ENCODE measurements at regions of chr15 and their contacts with region 1.

Region 1: DNA sequence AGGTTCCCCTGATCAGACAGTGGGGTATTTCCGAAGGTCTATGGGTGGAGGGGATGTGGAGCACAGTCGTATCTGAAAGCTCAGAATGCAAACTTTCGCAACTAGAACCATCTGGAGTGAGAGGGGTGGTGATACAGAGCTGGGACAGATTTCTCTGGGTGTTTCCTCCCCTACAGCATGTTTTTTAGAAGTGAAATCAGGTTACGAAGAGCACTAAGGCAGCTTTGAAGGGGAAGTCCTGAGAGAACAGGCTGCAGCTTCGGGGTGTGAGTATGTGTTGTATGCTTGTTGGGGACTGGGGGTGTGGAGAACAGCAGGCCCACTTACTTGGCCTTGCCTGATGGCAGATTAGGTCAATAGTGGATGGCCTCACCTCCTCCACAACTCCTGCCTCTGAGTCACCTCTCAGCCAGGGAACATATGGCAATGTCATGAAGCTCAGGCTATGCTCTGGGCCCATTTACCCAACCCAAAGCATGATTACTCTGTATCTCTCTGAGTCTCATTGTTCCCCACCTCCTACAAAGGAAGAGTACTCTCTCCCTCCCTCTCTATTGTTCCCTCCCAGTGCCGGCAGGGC is 107.2 kb upstream of the RASGRP1 start:
- DNase-seq: peak; percentile 6
- ATAC-seq: no peak
- H3K4me3 ChIP-seq: no peak overlapping the region
- H3K27ac ChIP-seq: no peak overlapping the region
- H3K4me1 ChIP-seq: no peaks in the 10 kb centered on the region
- H3K27me3 ChIP-seq: peaks cover 55% of the 10 kb centered on the region
- CTCF ChIP-seq: no peak
- POLR2A ChIP-seq: no peak
- RAD21 ChIP-seq: no peak

Region 2: GRCh38 chr15:38176155-38176554 is 495.6 kb before region 1 on chr15:
- CTCF ChIA-PET with region 1: no interaction called
- POLR2A ChIA-PET with region 1: no interaction called
- dilution Hi-C with region 1: no loop called
- in situ Hi-C with region 1: loop called (anchors 25 kb)
- intact Hi-C with region 1: no loop called
- DNase-seq: peak; percentile 68
- ATAC-seq: peak; percentile 83
- H3K4me3 ChIP-seq: no peak overlapping the region
- H3K27ac ChIP-seq: no peak overlapping the region
- H3K4me1 ChIP-seq: no peaks in the 10 kb centered on the region
- H3K27me3 ChIP-seq: peaks cover 14% of the 10 kb centered on the region
- CTCF ChIP-seq: no peak
- POLR2A ChIP-seq: no peak
- RAD21 ChIP-seq: no peak

Region 3: GRCh38 chr15:38461066-38461833 is 210.5 kb before region 1 on chr15:
- CTCF ChIA-PET with region 1: no interaction called
- POLR2A ChIA-PET with region 1: no interaction called
- dilution Hi-C with region 1: no loop called
- in situ Hi-C with region 1: no loop called
- intact Hi-C with region 1: no loop called
- DNase-seq: peak; percentile 63
- ATAC-seq: peak; percentile 99
- H3K4me3 ChIP-seq: no peak overlapping the region
- H3K27ac ChIP-seq: no peak overlapping the region
- H3K4me1 ChIP-seq: 0 out of 2 replicates have a peak, but pooled peaks cover 1% of the 10 kb centered on the region
- H3K27me3 ChIP-seq: no peaks in the 10 kb centered on the region
- CTCF ChIP-seq: no peak
- POLR2A ChIP-seq: no peak
- RAD21 ChIP-seq: no peak

Region 4: DNA sequence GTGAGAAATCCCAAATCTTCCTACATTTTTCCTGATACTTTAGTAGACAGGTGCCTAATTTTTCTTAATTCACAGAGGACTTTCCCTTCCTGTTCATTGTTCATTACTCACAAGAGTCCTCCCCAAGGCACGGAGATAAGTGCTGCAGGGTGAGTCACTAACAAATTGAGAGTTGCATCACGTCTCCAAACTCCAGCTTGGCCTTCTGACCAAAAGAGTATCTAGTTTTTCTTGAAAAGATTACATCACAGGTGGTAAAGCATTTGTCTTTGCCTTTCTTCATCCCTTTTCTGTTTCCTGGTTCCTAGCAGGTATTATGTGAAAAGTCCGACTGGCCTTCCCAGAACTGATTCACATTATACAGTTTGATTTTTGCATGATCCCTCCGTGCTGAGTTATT is 82.3 kb before region 1 on chr15:
- CTCF ChIA-PET with region 1: no interaction called
- POLR2A ChIA-PET with region 1: no interaction called
- dilution Hi-C with region 1: no loop called
- in situ Hi-C with region 1: no loop called
- intact Hi-C with region 1: loop called (anchors 5 kb)
- DNase-seq: peak; percentile 85
- ATAC-seq: peak; percentile 72
- H3K4me3 ChIP-seq: no peak overlapping the region
- H3K27ac ChIP-seq: no peak overlapping the region
- H3K4me1 ChIP-seq: no peaks in the 10 kb centered on the region
- H3K27me3 ChIP-seq: peaks cover 37% of the 10 kb centered on the region
- CTCF ChIP-seq: no peak
- POLR2A ChIP-seq: no peak
- RAD21 ChIP-seq: no peak

Region 5: DNA sequence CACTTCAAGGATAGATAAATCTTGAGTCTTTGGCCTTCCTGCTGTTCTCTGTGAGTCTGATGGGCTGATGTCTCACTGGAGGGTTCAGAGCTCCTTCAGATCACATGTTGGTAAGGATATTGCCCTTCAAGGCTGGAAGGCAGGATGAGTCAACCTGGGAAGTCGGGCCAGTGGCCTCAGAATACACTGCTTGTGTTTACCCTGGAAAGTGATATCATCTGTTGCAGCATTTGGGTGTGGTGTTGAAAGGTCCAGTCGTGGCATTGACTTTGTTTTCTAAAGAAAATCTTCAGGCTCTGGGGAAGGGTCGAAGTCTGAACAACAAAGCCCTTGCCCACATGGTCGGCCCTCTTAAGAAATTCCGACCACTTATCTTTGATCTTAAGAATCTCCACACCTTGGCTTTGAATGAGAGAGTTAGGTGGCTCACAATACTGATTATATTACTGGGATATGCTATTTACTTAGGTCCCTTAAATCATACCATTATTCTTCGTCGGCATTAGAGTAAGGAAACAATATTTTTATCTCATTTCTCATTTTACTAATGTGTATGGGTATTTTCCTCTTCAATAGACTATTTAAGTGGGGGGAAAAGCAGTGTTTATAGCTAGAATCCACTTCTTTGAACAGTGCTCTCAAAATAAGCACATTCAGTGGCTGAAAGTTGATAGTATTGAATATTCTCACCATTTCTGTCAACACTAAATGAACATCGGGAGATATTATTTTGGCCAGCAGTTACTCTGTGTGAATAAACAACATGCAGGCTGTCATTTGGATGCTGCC is 196.8 kb after region 1 on chr15:
- CTCF ChIA-PET with region 1: no interaction called
- POLR2A ChIA-PET with region 1: no interaction called
- dilution Hi-C with region 1: no loop called
- in situ Hi-C with region 1: no loop called
- intact Hi-C with region 1: no loop called
- DNase-seq: peak; percentile 94
- ATAC-seq: peak; percentile 76
- H3K4me3 ChIP-seq: no peak overlapping the region
- H3K27ac ChIP-seq: peak overlapping the region; percentile 66
- H3K4me1 ChIP-seq: peaks cover 21% of the 10 kb centered on the region
- H3K27me3 ChIP-seq: no peaks in the 10 kb centered on the region
- CTCF ChIP-seq: no peak
- POLR2A ChIP-seq: no peak
- RAD21 ChIP-seq: 0 out of 2 replicates have a peak, but pooled peaks have one; percentile 26